ENCODE measurements at regions of chr3 and their contacts with region 1.

Region 1: DNA sequence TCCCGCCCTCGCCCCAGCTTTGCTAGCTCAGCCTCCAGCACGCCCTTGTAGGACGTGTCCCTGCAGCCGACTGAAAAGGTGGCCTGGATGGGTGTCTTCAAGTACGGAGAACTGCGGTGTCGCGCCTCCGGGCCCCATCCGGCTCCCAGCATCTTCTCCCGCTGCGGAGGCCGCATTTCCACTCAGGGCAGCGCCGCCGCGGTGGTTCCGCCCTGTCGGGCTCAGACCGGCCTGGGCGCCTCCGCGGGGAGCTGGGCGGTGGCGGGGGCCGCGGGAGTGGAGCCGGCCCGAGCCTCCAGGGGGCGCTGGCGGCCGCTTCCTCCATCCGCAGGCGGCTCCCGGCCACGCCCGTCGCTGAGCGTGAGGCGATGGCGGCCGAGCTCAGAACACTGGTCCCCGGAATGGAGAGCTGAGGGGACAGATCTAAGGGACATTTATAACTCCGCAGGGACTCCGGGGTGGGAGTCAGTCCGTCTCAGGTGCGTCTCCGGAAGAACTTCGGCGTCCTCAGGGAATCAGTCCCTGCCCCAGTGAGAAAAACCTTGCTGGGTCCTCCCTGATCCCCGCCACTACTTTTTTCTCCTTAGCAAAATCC is 13.6 kb upstream of the SMCO1 start:
- DNase-seq: peak; percentile 90
- H3K4me3 Mint-ChIP-seq: peak overlapping the region; percentile 73
- H3K27ac Mint-ChIP-seq: peak overlapping the region; percentile 85
- H3K4me1 Mint-ChIP-seq: peaks cover 22% of the 10 kb centered on the region
- H3K27me3 Mint-ChIP-seq: no peaks in the 10 kb centered on the region

Region 2: DNA sequence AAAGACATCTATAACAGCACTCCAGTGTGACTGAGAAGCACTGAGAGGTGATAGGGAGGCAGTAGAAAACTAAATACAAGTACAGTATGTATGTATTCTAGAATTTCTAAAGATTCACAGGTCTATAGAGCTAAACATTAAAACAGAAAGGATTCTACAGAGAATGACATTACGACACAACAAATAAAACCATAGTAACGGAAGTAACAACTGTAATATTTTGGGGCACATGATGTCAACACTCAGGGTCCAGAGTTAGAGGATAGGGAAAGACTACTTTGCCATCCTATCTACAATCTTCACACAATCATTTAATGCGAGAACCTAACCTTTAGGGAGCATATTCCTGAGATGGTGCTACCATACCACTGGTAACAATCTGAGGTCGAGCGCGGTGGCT is 110.1 kb before region 1 on chr3:
- CTCF ChIA-PET with region 1: no interaction called
- POLR2A ChIA-PET with region 1: no interaction called
- DNase-seq: no peak
- H3K4me3 Mint-ChIP-seq: no peak overlapping the region
- H3K27ac Mint-ChIP-seq: no peak overlapping the region
- H3K4me1 Mint-ChIP-seq: peaks cover 8% of the 10 kb centered on the region
- H3K27me3 Mint-ChIP-seq: no peaks in the 10 kb centered on the region

Region 3: GRCh38 chr3:196432137-196432879 is 96.4 kb before region 1 on chr3 and contains the start of gene UBXN7:
- CTCF ChIA-PET with region 1: interaction called, 10 read pairs
- POLR2A ChIA-PET with region 1: interaction called, 9 read pairs
- DNase-seq: peak; percentile 98
- H3K4me3 Mint-ChIP-seq: peak within 1 kb of the TSS; percentile 77
- H3K27ac Mint-ChIP-seq: peak within 1 kb of the TSS; percentile 93
- H3K4me1 Mint-ChIP-seq: peaks cover 20% of the 10 kb centered on the region
- H3K27me3 Mint-ChIP-seq: no peaks in the 10 kb centered on the region
- total RNA-seq, gene UBXN7: 55.9 to 60.5 TPM

Region 4: GRCh38 chr3:196555295-196555694 is 26.6 kb after region 1 on chr3:
- CTCF ChIA-PET with region 1: interaction called, 16 read pairs
- POLR2A ChIA-PET with region 1: interaction called, 6 read pairs
- DNase-seq: no peak
- H3K4me3 Mint-ChIP-seq: no peak overlapping the region
- H3K27ac Mint-ChIP-seq: no peak overlapping the region
- H3K4me1 Mint-ChIP-seq: peaks cover 14% of the 10 kb centered on the region
- H3K27me3 Mint-ChIP-seq: no peaks in the 10 kb centered on the region

Region 5: DNA sequence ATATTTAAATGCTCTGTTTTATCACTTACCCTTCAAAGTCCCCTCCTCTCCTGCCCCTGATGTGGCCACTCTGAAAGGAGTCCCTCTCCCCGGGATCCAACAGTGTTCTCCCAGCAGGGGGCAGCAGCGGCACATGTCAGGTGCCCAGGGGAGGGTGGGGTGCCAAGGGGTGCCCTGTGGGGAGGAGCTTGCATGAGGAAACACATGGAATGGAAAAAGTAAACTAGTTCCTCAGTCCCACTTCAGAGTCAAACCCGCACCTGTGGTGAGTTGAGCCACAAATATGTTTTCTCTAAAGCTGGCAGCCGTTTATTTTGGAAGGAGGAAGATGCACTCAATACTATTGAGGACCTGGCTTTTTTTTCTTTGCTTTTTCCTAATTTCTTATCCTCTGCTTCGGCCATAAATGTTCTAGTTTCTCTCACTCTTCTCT is 80.6 kb after region 1 on chr3:
- CTCF ChIA-PET with region 1: interaction called, 14 read pairs
- POLR2A ChIA-PET with region 1: interaction called, 7 read pairs
- DNase-seq: peak; percentile 95
- H3K4me3 Mint-ChIP-seq: peak overlapping the region; percentile 42
- H3K27ac Mint-ChIP-seq: peak overlapping the region; percentile 81
- H3K4me1 Mint-ChIP-seq: peaks cover 54% of the 10 kb centered on the region
- H3K27me3 Mint-ChIP-seq: peaks cover 6% of the 10 kb centered on the region

Region 6: DNA sequence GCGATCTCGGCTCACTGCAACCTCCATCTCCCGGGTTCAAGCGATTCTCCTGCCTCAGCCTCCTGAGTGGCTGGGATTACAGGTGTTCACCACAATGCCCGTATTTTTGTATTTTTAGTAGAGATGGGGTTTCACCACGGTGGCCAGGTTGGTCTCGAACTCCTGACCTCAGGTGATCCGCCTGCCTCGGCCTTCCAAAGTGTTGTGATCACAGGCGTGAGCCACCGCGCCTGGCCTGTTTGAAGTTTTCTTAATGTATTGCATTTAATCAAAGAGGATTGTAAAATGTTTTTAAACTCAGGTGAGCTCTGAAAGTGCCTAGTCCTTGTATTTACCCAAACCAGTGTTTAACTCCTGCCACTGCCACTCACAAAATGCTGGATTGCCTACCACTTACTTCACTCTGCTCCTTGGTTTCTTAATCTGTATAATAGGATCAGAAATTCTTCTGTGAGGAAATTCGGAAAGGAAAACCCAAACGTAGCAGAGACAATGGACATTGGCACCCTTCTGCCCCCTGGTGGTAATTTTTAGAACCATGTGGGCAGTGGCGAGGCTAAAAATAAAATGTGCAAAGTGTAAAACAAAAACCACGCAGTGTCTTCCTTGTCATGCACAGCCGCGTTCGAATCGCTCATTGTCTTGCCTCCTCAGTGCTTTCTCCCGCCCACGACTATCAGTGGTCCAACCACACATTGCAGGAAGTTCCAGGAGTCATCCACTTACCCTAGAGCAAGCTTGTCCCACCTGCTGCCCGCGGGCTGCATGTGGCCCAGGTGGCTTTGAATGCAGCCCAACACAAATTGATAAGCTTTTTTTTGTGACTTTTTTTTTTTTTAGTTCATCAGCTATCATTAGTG is 156.0 kb after region 1 on chr3:
- CTCF ChIA-PET with region 1: interaction called, 11 read pairs
- POLR2A ChIA-PET with region 1: interaction called, 3 read pairs
- DNase-seq: peak; percentile 71
- H3K4me3 Mint-ChIP-seq: peak overlapping the region; percentile 52
- H3K27ac Mint-ChIP-seq: peak overlapping the region; percentile 63
- H3K4me1 Mint-ChIP-seq: peaks cover 33% of the 10 kb centered on the region
- H3K27me3 Mint-ChIP-seq: no peaks in the 10 kb centered on the region

Region 7: DNA sequence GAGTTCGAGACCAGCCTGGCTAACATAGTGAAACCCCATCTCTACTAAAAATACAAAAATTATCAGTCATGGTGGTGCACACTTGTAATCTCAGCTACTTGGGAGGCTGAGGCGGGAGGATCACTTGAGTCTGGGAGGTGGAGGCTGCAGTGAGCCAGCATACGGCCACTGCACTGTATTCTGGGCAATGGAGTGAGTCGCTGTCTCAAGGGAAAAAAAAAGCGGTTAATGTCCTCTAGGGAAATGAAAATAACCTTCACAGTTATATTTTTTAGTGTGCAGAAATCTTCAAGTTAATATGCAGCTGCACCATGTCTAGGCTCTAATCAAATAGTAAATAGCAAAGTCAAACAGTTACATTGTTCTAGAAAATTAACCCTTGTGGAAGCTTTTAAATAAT is 168.5 kb after region 1 on chr3:
- CTCF ChIA-PET with region 1: no interaction called
- POLR2A ChIA-PET with region 1: no interaction called
- DNase-seq: no peak
- H3K4me3 Mint-ChIP-seq: no peak overlapping the region
- H3K27ac Mint-ChIP-seq: no peak overlapping the region
- H3K4me1 Mint-ChIP-seq: peaks cover 14% of the 10 kb centered on the region
- H3K27me3 Mint-ChIP-seq: no peaks in the 10 kb centered on the region